Naive thymus-derived CD4-positive, alpha-beta T cell (primary cell): ENCODE measurements at regions of chr17 and their contacts with region 1.

Region 1: DNA sequence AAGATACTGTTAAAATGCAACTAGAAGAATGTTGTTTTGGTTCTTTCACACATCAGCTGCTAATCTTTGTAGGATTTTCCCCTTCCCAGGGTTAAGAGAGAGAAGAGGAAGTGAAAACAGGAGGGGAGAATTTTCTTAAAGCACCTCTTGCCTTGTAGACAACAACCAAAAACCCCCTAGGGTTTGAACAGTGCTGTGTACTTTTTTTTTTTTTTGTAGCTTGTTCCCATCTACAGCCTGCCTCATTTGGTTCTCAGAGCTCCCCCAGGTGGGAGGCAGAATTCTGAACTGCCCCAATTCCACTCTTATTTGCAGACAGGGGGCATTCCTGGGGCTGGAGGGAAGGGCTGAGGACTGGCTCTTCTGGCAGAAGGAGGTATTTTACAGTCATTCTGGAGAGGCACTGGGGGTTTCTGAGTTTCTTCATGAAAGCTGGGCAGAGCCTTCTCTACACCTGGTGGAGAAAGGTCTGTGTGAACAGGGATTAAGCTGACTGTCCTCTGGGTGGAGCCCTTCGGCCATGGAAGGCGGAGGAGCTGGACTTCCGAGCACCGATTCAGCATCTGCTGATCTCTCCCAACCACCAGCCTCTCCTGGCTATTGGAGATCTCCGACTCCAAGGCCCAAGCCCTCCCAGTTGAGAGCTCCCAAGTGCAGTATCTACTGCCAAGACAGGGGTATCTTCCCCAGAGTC is 32.2 kb downstream of the SMARCE1 start:
- DNase-seq: peak in 8 of 9 donors; percentile 24 to 82 (median 70)
- ATAC-seq: peak; percentile 79
- H3K4me3 ChIP-seq: peak overlapping the region; percentile 31
- H3K4me3 Mint-ChIP-seq: peak overlapping the region; percentile 71 to 88 (median 82)
- H3K27ac ChIP-seq: peak overlapping the region; percentile 94
- H3K27ac Mint-ChIP-seq: peak overlapping the region; percentile 90 to 100 (median 98)
- H3K4me1 ChIP-seq: peaks cover 50 to 77% of the 10 kb centered on the region in 2 donors
- H3K4me1 Mint-ChIP-seq: peaks cover 41 to 84% (median 79%) of the 10 kb centered on the region in 7 donors
- H3K27me3 ChIP-seq: no peaks in the 10 kb centered on the region
- H3K27me3 Mint-ChIP-seq: no peaks in the 10 kb centered on the region

Region 2: DNA sequence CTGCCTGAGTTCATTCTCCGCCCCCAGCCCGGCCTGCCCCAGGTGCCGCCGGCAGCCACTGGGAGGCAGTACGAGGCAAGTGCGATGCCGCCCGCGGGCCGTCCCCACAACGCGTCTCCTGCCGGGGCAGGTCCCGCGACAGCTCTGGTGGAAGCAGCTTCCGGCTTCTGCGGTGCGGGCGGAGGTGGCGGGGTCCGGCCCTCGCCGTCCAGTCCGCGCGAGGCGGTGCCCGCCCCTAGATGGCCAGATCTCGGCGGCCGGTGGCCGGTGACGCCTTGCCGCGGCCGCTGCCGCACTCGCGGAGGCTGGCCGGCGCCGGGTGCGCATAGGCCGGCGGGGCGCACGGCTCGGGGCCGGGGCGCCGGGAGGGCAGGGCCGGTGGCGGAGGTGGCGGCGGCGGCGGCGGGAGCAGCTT is 252.7 kb before region 1 on chr17:
- CTCF ChIA-PET with region 1: interaction called, 3 read pairs
- POLR2A ChIA-PET with region 1: interaction called, 4 read pairs
- intact Hi-C with region 1: loop called in 1 of 2 experiments (anchors 1 kb)
- DNase-seq: peak; percentile 60 to 90 (median 74)
- ATAC-seq: peak; percentile 88
- H3K4me3 ChIP-seq: peak overlapping the region; percentile 35
- H3K4me3 Mint-ChIP-seq: peak overlapping the region; percentile 10 to 87 (median 70)
- H3K27ac ChIP-seq: no peak overlapping the region
- H3K27ac Mint-ChIP-seq: peak overlapping the region in 1 of 9 donors; percentile 85
- H3K4me1 ChIP-seq: peaks cover 4 to 7% of the 10 kb centered on the region in 2 donors
- H3K4me1 Mint-ChIP-seq: peaks cover 4 to 37% (median 12%) of the 10 kb centered on the region in 7 donors
- H3K27me3 ChIP-seq: no peaks in the 10 kb centered on the region
- H3K27me3 Mint-ChIP-seq: peaks cover 0 to 23% (median 8%) of the 10 kb centered on the region in 5 donors

Region 3: GRCh38 chr17:40480501-40481003 is 134.9 kb before region 1 on chr17:
- CTCF ChIA-PET with region 1: interaction called, 3 read pairs
- POLR2A ChIA-PET with region 1: no interaction called
- intact Hi-C with region 1: loop called in 1 of 2 experiments (anchors 2 kb)
- DNase-seq: peak; percentile 59 to 96 (median 92)
- ATAC-seq: peak; percentile 94
- H3K4me3 ChIP-seq: peak overlapping the region; percentile 5
- H3K4me3 Mint-ChIP-seq: peak overlapping the region; percentile 64 to 83 (median 73)
- H3K27ac ChIP-seq: peak overlapping the region; percentile 76
- H3K27ac Mint-ChIP-seq: peak overlapping the region; percentile 93 to 100 (median 98)
- H3K4me1 ChIP-seq: peaks cover 24 to 48% of the 10 kb centered on the region in 2 donors
- H3K4me1 Mint-ChIP-seq: peaks cover 31 to 84% (median 64%) of the 10 kb centered on the region in 7 donors
- H3K27me3 ChIP-seq: no peaks in the 10 kb centered on the region
- H3K27me3 Mint-ChIP-seq: no peaks in the 10 kb centered on the region

Region 4: GRCh38 chr17:40559954-40560591 is 55.4 kb before region 1 on chr17:
- CTCF ChIA-PET with region 1: interaction called, 425 read pairs
- POLR2A ChIA-PET with region 1: interaction called, 2,132 read pairs
- intact Hi-C with region 1: loop called (anchors 1 kb)
- DNase-seq: peak; percentile 74 to 88 (median 82)
- ATAC-seq: peak; percentile 60
- H3K4me3 ChIP-seq: peak overlapping the region; percentile 90
- H3K4me3 Mint-ChIP-seq: peak overlapping the region; percentile 90 to 100 (median 98)
- H3K27ac ChIP-seq: peak overlapping the region; percentile 99
- H3K27ac Mint-ChIP-seq: peak overlapping the region; percentile 92 to 100 (median 100)
- H3K4me1 ChIP-seq: peaks cover 50 to 52% of the 10 kb centered on the region in 2 donors
- H3K4me1 Mint-ChIP-seq: peaks cover 39 to 88% (median 58%) of the 10 kb centered on the region in 7 donors
- H3K27me3 ChIP-seq: no peaks in the 10 kb centered on the region
- H3K27me3 Mint-ChIP-seq: peaks cover 0 to under 1% (median 0%) of the 10 kb centered on the region in 5 donors

Region 5: DNA sequence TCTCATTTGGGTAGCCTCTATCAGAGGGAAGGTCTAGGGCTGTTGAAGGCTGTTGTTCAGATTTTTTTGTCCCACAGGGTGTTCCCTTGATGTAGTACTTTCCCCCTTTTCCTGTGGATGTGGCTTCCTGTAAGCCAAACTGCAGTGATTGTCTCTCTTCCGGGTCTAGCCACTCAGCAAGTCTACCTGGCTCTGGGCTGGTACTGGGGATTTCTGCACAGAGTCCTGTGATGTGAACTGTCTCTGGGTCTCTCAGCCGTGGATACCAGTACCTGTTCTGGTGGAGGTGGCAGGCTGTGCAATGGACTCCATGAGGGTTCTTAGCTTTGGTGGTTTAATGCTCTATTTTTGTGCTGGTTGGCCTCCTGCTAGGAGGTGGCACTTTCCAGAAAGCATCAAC is 26.9 kb before region 1 on chr17:
- CTCF ChIA-PET with region 1: interaction called, 9 read pairs
- POLR2A ChIA-PET with region 1: interaction called, 55 read pairs
- intact Hi-C with region 1: no loop called
- DNase-seq: peak in 1 of 9 donors; percentile 45
- ATAC-seq: no peak
- H3K4me3 ChIP-seq: peak overlapping the region; percentile 14
- H3K4me3 Mint-ChIP-seq: peak overlapping the region; percentile 33 to 90 (median 76)
- H3K27ac ChIP-seq: peak overlapping the region; percentile 47
- H3K27ac Mint-ChIP-seq: peak overlapping the region; percentile 21 to 99 (median 96)
- H3K4me1 ChIP-seq: peaks cover 3 to 61% of the 10 kb centered on the region in 2 donors
- H3K4me1 Mint-ChIP-seq: peaks cover 53 to 94% (median 85%) of the 10 kb centered on the region in 7 donors
- H3K27me3 ChIP-seq: no peaks in the 10 kb centered on the region
- H3K27me3 Mint-ChIP-seq: no peaks in the 10 kb centered on the region

Region 6: GRCh38 chr17:40726919-40727318 is 111.5 kb after region 1 on chr17:
- CTCF ChIA-PET with region 1: interaction called, 4 read pairs
- POLR2A ChIA-PET with region 1: no interaction called
- intact Hi-C with region 1: loop called (anchors 1 to 5 kb)
- DNase-seq: peak in 5 of 9 donors; percentile 4 to 37 (median 23)
- ATAC-seq: no peak
- H3K4me3 ChIP-seq: no peak overlapping the region
- H3K4me3 Mint-ChIP-seq: no peak overlapping the region
- H3K27ac ChIP-seq: no peak overlapping the region
- H3K27ac Mint-ChIP-seq: no peak overlapping the region
- H3K4me1 ChIP-seq: no peaks in the 10 kb centered on the region
- H3K4me1 Mint-ChIP-seq: peaks cover 0 to 2% (median 0%) of the 10 kb centered on the region in 7 donors
- H3K27me3 ChIP-seq: peaks cover 0 to 3% of the 10 kb centered on the region in 2 donors
- H3K27me3 Mint-ChIP-seq: peaks cover 5 to 44% (median 29%) of the 10 kb centered on the region in 5 donors